Heart right ventricle (tissue), 16 donors: ENCODE measurements at regions of chr17 and their contacts with region 1.

Region 1: DNA sequence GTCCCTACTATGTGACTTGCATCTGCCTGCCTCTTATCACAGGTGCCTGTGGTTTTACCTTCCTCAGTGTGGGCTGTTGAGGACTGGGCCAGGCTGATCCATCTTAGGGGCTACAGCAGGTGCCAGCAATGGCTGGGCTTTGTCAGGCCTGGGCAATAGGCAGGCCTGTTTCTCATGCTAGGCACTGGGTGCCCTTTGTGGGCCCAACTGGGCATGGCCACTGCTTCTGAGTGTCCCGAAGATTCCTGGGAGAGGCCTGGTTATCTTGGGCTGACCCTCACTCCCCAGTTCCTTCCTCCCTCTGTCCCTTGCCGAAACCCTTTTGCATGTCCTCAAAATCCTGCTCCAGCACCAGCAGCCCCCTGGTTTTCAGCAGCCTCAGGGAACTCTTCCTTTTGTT is 1024.9 kb downstream of the KCNJ18 start:
- DNase-seq: no peak
- ATAC-seq: no peak
- H3K4me3 ChIP-seq: no peak overlapping the region
- H3K27ac ChIP-seq: no peak overlapping the region
- H3K4me1 ChIP-seq: no peaks in the 10 kb centered on the region
- H3K27me3 ChIP-seq: no peaks in the 10 kb centered on the region
- CTCF ChIP-seq: no peak

Region 2: GRCh38 chr17:22123536-22124281 is 593.5 kb before region 1 on chr17:
- intact Hi-C with region 1: no loop called
- DNase-seq: no peak
- ATAC-seq: no peak
- H3K4me3 ChIP-seq: no peak overlapping the region
- H3K27ac ChIP-seq: no peak overlapping the region
- H3K4me1 ChIP-seq: no peaks in the 10 kb centered on the region
- H3K27me3 ChIP-seq: no peaks in the 10 kb centered on the region
- CTCF ChIP-seq: no peak

Region 3: GRCh38 chr17:22193113-22193512 is 524.1 kb before region 1 on chr17:
- intact Hi-C with region 1: no loop called
- DNase-seq: no peak
- ATAC-seq: no peak
- H3K4me3 ChIP-seq: no peak overlapping the region
- H3K27ac ChIP-seq: no peak overlapping the region
- H3K4me1 ChIP-seq: no peaks in the 10 kb centered on the region
- H3K27me3 ChIP-seq: no peaks in the 10 kb centered on the region
- CTCF ChIP-seq: no peak

Region 4: GRCh38 chr17:22654447-22654846 is 62.8 kb before region 1 on chr17:
- intact Hi-C with region 1: loop called in 1 of 10 experiments (anchors 10 kb)
- DNase-seq: no peak
- ATAC-seq: no peak
- H3K4me3 ChIP-seq: no peak overlapping the region
- H3K27ac ChIP-seq: no peak overlapping the region
- H3K4me1 ChIP-seq: no peaks in the 10 kb centered on the region
- H3K27me3 ChIP-seq: no peaks in the 10 kb centered on the region
- CTCF ChIP-seq: no peak